Activated CD4-positive, alpha-beta T cell treated with anti-CD3 and anti-CD28 coated beads for 36 hours (primary cell): ENCODE measurements at regions of chr13 and their contacts with region 1.

Region 1: DNA sequence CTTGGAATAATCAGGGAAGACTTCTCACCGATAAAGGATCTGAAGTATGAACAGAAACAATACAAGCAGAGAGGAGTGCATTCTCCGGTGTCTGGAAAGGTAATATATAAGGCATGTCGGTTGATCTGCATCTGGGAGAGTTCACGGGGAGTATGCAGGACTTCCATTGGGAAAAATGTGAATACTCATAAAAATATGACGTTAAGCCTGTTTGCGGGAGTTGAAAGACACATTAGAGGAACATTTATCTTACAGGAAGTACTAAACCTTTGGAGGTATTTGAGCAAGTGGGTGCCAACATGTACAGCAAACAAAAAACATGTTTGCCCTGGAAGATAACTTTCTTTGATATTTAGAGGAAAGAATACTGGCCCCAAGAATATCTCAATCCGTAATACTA is 286.8 kb downstream of the SLITRK6 start:
- DNase-seq: no peak
- ATAC-seq: no peak
- H3K4me3 Mint-ChIP-seq: no peak overlapping the region
- H3K27ac Mint-ChIP-seq: no peak overlapping the region
- H3K4me1 Mint-ChIP-seq: no peaks in the 10 kb centered on the region
- H3K27me3 Mint-ChIP-seq: no peaks in the 10 kb centered on the region

Region 2: GRCh38 chr13:84137292-84137691 is 1375.1 kb before region 1 on chr13:
- CTCF ChIA-PET with region 1: no interaction called
- POLR2A ChIA-PET with region 1: no interaction called
- intact Hi-C with region 1: no loop called
- DNase-seq: peak; percentile 74
- ATAC-seq: peak; percentile 99
- H3K4me3 Mint-ChIP-seq: no peak overlapping the region
- H3K27ac Mint-ChIP-seq: peak overlapping the region; percentile 1
- H3K4me1 Mint-ChIP-seq: peaks cover 18% of the 10 kb centered on the region
- H3K27me3 Mint-ChIP-seq: no peaks in the 10 kb centered on the region

Region 3: GRCh38 chr13:85564598-85564997 is 52.2 kb after region 1 on chr13:
- CTCF ChIA-PET with region 1: no interaction called
- POLR2A ChIA-PET with region 1: no interaction called
- intact Hi-C with region 1: loop called in 1 of 2 experiments (anchors 5 kb)
- DNase-seq: no peak
- ATAC-seq: no peak
- H3K4me3 Mint-ChIP-seq: no peak overlapping the region
- H3K27ac Mint-ChIP-seq: no peak overlapping the region
- H3K4me1 Mint-ChIP-seq: no peaks in the 10 kb centered on the region
- H3K27me3 Mint-ChIP-seq: no peaks in the 10 kb centered on the region